CD4-positive, alpha-beta memory T cell (primary cell): ENCODE measurements at regions of chr3 and their contacts with region 1.

Region 1: GRCh38 chr3:112498914-112499711 is at the start of gene BTLA:
- DNase-seq: peak; percentile 39 to 48 (median 42)
- H3K4me3 ChIP-seq: peak within 1 kb of the TSS; percentile 65 to 66
- H3K4me3 Mint-ChIP-seq: peak within 1 kb of the TSS; percentile 94 to 100 (median 97)
- H3K27ac ChIP-seq: peak within 1 kb of the TSS; percentile 57
- H3K27ac Mint-ChIP-seq: peak within 1 kb of the TSS; percentile 91 to 97 (median 95)
- H3K4me1 ChIP-seq: peaks cover 44% of the 10 kb centered on the region
- H3K4me1 Mint-ChIP-seq: peaks cover 31 to 63% (median 38%) of the 10 kb centered on the region in 4 donors
- H3K27me3 ChIP-seq: no peaks in the 10 kb centered on the region
- H3K27me3 Mint-ChIP-seq: no peaks in the 10 kb centered on the region
- total RNA-seq, gene BTLA: 22.9 to 24.9 TPM

Region 2: DNA sequence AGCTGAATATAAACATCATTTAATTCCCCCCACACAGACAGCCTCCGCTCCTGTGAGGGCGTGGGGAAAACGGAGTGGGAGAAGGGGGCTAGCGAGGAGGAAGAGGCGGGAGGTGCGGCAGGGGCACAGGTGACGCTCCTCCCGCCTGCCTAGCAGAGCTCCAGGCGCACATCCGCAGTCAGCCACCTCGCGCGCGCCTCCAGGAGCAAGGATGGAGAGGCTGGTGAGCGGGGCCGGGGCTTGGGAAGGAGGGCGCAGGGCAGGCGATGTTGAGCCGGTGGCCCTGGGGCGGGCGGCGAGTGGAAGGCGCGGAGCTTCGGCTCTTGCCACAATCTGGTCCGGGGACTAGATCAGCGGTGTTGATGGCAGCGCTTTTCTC is 166.1 kb before region 1 on chr3 and contains the start of gene CD200:
- CTCF ChIA-PET with region 1: interaction called, 4 read pairs
- POLR2A ChIA-PET with region 1: interaction called, 22 read pairs
- intact Hi-C with region 1: no loop called
- DNase-seq: peak; percentile 36 to 44 (median 42)
- H3K4me3 ChIP-seq: peak within 1 kb of the TSS; percentile 39 to 61
- H3K4me3 Mint-ChIP-seq: peak within 1 kb of the TSS; percentile 88 to 93 (median 90)
- H3K27ac ChIP-seq: peak within 1 kb of the TSS; percentile 25
- H3K27ac Mint-ChIP-seq: peak within 1 kb of the TSS; percentile 2 to 89 (median 74)
- H3K4me1 ChIP-seq: peaks cover 27% of the 10 kb centered on the region
- H3K4me1 Mint-ChIP-seq: peaks cover 13 to 45% (median 32%) of the 10 kb centered on the region in 4 donors
- H3K27me3 ChIP-seq: no peaks in the 10 kb centered on the region
- H3K27me3 Mint-ChIP-seq: no peaks in the 10 kb centered on the region
- total RNA-seq, gene CD200: 0.93 to 1.8 TPM

Region 3: GRCh38 chr3:112464264-112464663 is 34.8 kb before region 1 on chr3:
- CTCF ChIA-PET with region 1: interaction called, 4 read pairs
- POLR2A ChIA-PET with region 1: interaction called, 17 read pairs
- intact Hi-C with region 1: loop called (anchors 1 kb)
- DNase-seq: peak in 4 of 5 donors; percentile 41 to 55 (median 48)
- H3K4me3 ChIP-seq: no peak overlapping the region
- H3K4me3 Mint-ChIP-seq: peak overlapping the region; percentile 56 to 86 (median 81)
- H3K27ac ChIP-seq: peak overlapping the region; percentile 22
- H3K27ac Mint-ChIP-seq: peak overlapping the region; percentile 71 to 89 (median 83)
- H3K4me1 ChIP-seq: peaks cover 80% of the 10 kb centered on the region
- H3K4me1 Mint-ChIP-seq: peaks cover 65 to 91% (median 79%) of the 10 kb centered on the region in 4 donors
- H3K27me3 ChIP-seq: no peaks in the 10 kb centered on the region
- H3K27me3 Mint-ChIP-seq: no peaks in the 10 kb centered on the region

Region 4: DNA sequence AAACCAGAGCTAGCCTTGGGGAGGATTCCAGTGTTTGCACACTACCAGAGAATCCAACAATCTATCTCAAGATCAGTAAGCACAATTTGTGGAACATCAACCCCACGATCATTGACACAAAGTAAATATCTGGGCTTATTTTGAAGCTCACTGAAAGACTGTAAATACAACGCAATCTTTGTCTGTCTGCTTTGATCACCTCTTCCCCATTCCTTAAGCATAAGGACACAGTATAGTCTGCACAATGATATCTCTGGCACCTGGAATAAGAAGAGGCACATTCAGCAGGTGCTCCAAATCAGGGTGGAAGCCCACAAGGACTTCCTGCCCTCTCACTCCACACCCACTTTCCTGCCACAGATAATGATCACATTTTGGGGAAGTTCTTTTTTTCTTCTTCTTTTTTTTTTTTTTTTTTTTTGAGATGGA is 25.9 kb before region 1 on chr3:
- CTCF ChIA-PET with region 1: interaction called, 4 read pairs
- POLR2A ChIA-PET with region 1: interaction called, 4 read pairs
- intact Hi-C with region 1: loop called (anchors 2 kb)
- DNase-seq: peak; percentile 33 to 61 (median 38)
- H3K4me3 ChIP-seq: no peak overlapping the region
- H3K4me3 Mint-ChIP-seq: peak overlapping the region in 7 of 8 donors; percentile 77 to 93 (median 85)
- H3K27ac ChIP-seq: no peak overlapping the region
- H3K27ac Mint-ChIP-seq: peak overlapping the region; percentile 74 to 97 (median 93)
- H3K4me1 ChIP-seq: peaks cover 68% of the 10 kb centered on the region
- H3K4me1 Mint-ChIP-seq: peaks cover 57 to 71% (median 67%) of the 10 kb centered on the region in 4 donors
- H3K27me3 ChIP-seq: no peaks in the 10 kb centered on the region
- H3K27me3 Mint-ChIP-seq: no peaks in the 10 kb centered on the region

Region 5: GRCh38 chr3:112604536-112604935 is 105.4 kb after region 1 on chr3:
- CTCF ChIA-PET with region 1: no interaction called
- POLR2A ChIA-PET with region 1: no interaction called
- intact Hi-C with region 1: no loop called
- DNase-seq: no peak
- H3K4me3 ChIP-seq: no peak overlapping the region
- H3K4me3 Mint-ChIP-seq: no peak overlapping the region
- H3K27ac ChIP-seq: no peak overlapping the region
- H3K27ac Mint-ChIP-seq: no peak overlapping the region
- H3K4me1 ChIP-seq: no peaks in the 10 kb centered on the region
- H3K4me1 Mint-ChIP-seq: peaks cover 0 to 3% (median 0%) of the 10 kb centered on the region in 4 donors
- H3K27me3 ChIP-seq: no peaks in the 10 kb centered on the region
- H3K27me3 Mint-ChIP-seq: peaks cover 0 to 4% of the 10 kb centered on the region in 2 donors

Region 6: GRCh38 chr3:112770032-112770626 is 271.0 kb after region 1 on chr3:
- CTCF ChIA-PET with region 1: no interaction called
- POLR2A ChIA-PET with region 1: no interaction called
- intact Hi-C with region 1: no loop called
- DNase-seq: no peak
- H3K4me3 ChIP-seq: no peak overlapping the region
- H3K4me3 Mint-ChIP-seq: no peak overlapping the region
- H3K27ac ChIP-seq: no peak overlapping the region
- H3K27ac Mint-ChIP-seq: peak overlapping the region in 2 of 7 donors; percentile 8 to 61
- H3K4me1 ChIP-seq: peaks cover 53% of the 10 kb centered on the region
- H3K4me1 Mint-ChIP-seq: peaks cover 37 to 57% (median 48%) of the 10 kb centered on the region in 4 donors
- H3K27me3 ChIP-seq: no peaks in the 10 kb centered on the region
- H3K27me3 Mint-ChIP-seq: no peaks in the 10 kb centered on the region